OCI-LY7 (cell line): ENCODE measurements at regions of chr3 and their contacts with region 1.

Region 1: GRCh38 chr3:116226266-116226943 is 218.9 kb downstream of the LSAMP start:
- DNase-seq: no peak
- H3K4me3 ChIP-seq: no peak overlapping the region
- H3K27ac ChIP-seq: no peak overlapping the region
- H3K4me1 ChIP-seq: no peaks in the 10 kb centered on the region
- CTCF ChIP-seq: no peak

Region 2: DNA sequence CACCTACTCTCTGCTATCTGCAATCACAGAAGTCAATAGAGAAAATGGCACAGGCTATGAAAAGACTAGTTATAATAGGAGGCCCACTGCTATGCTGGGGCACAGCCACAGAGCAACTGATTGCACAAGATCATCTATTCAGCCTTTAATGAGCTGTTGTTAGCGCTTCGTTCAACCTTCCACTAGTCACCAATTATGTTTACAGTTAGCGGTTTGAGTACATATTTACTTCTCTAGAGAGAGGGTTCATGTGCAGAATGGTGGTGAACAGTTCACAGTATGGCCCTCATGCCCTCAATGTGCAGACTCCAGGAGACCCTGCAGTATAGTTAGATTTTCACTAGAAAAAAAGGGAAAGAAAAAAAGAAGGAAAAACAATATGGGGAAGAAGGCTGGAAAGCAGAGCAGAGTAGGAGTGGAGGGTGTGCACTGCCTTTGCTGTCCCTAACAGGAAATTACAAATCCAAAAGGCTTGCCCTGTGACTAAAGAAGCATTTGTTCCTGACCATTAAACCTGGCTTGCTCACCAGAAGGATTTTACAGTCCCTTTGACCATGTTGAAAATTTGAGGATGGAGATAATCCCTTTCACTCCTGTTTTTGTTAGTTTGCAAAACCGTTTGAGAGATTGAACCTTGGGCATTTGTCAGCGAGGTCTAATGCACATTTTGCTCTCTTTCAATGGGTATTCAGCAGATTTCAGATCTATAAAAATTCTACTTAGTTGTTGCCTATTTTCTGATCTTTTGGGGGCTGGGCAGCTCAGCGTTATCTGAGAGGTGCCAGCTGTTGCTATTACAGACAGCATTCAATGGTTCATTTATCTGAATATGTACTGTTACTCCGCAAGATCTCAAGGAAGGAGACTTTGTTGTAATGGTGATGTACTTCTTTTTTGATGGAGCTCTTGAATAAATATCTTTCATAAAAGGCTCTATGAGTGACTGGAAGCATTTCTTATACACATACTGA is 77.2 kb before region 1 on chr3:
- CTCF ChIA-PET with region 1: no interaction called
- POLR2A ChIA-PET with region 1: no interaction called
- intact Hi-C with region 1: no loop called
- DNase-seq: no peak
- H3K4me3 ChIP-seq: no peak overlapping the region
- H3K27ac ChIP-seq: no peak overlapping the region
- H3K4me1 ChIP-seq: no peaks in the 10 kb centered on the region
- CTCF ChIP-seq: no peak

Region 3: GRCh38 chr3:116161575-116162525 is 64.6 kb before region 1 on chr3:
- CTCF ChIA-PET with region 1: no interaction called
- POLR2A ChIA-PET with region 1: no interaction called
- intact Hi-C with region 1: loop called (anchors 10 kb)
- DNase-seq: no peak
- H3K4me3 ChIP-seq: no peak overlapping the region
- H3K27ac ChIP-seq: no peak overlapping the region
- H3K4me1 ChIP-seq: no peaks in the 10 kb centered on the region
- CTCF ChIP-seq: no peak

Region 4: GRCh38 chr3:116776880-116777785 is 550.7 kb after region 1 on chr3:
- CTCF ChIA-PET with region 1: no interaction called
- POLR2A ChIA-PET with region 1: no interaction called
- intact Hi-C with region 1: no loop called
- DNase-seq: no peak
- H3K4me3 ChIP-seq: no peak overlapping the region
- H3K27ac ChIP-seq: no peak overlapping the region
- H3K4me1 ChIP-seq: no peaks in the 10 kb centered on the region
- CTCF ChIP-seq: no peak